HAP-1 (cell line): ENCODE measurements at regions of chr9 and their contacts with region 1.

Region 1: GRCh38 chr9:128927731-128928411 is 7.1 kb downstream of the PHYHD1 start:
- DNase-seq: peak; percentile 71 to 77
- H3K4me3 ChIP-seq: no peak overlapping the region
- H3K4me1 ChIP-seq: no peaks in the 10 kb centered on the region
- H3K27me3 ChIP-seq: 0 out of 2 replicates have a peak, but pooled peaks cover 2% of the 10 kb centered on the region

Region 2: DNA sequence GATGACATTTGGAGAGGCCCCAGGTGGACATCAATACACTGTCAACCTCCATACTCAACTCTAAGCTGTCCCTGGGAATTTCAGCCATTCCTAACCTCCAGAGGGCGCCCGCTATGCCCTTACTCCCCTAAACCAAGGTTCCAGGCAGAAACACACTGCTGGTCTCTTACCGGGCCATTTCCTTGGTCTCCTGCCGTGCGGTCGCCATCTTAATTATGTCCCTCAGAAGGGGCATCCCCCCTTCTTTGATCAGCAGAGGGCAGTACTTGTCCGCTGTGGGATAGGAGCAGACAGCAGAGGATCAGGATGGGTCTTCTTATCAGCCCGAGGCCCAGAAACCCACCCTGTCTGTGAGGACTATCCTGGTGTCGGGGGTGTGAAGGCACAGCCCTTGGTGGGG is 194.6 kb before region 1 on chr9:
- in situ Hi-C with region 1: loop called (anchors 5 kb)
- DNase-seq: peak; percentile 91 to 93
- H3K4me3 ChIP-seq: no peak overlapping the region
- H3K4me1 ChIP-seq: no peaks in the 10 kb centered on the region
- H3K27me3 ChIP-seq: no peaks in the 10 kb centered on the region

Region 3: GRCh38 chr9:128845155-128845931 is 82.5 kb before region 1 on chr9:
- in situ Hi-C with region 1: loop called (anchors 5 kb)
- DNase-seq: no peak
- H3K4me3 ChIP-seq: no peak overlapping the region
- H3K4me1 ChIP-seq: no peaks in the 10 kb centered on the region
- H3K27me3 ChIP-seq: no peaks in the 10 kb centered on the region

Region 4: GRCh38 chr9:130343445-130343918 is 1415.6 kb after region 1 on chr9:
- in situ Hi-C with region 1: no loop called
- DNase-seq: peak in 1 of 2 experiments; percentile 74
- H3K4me3 ChIP-seq: no peak overlapping the region
- H3K4me1 ChIP-seq: no peaks in the 10 kb centered on the region
- H3K27me3 ChIP-seq: no peaks in the 10 kb centered on the region